AG04450 (cell line): ENCODE measurements at regions of chr3 and their contacts with region 1.

Region 1: DNA sequence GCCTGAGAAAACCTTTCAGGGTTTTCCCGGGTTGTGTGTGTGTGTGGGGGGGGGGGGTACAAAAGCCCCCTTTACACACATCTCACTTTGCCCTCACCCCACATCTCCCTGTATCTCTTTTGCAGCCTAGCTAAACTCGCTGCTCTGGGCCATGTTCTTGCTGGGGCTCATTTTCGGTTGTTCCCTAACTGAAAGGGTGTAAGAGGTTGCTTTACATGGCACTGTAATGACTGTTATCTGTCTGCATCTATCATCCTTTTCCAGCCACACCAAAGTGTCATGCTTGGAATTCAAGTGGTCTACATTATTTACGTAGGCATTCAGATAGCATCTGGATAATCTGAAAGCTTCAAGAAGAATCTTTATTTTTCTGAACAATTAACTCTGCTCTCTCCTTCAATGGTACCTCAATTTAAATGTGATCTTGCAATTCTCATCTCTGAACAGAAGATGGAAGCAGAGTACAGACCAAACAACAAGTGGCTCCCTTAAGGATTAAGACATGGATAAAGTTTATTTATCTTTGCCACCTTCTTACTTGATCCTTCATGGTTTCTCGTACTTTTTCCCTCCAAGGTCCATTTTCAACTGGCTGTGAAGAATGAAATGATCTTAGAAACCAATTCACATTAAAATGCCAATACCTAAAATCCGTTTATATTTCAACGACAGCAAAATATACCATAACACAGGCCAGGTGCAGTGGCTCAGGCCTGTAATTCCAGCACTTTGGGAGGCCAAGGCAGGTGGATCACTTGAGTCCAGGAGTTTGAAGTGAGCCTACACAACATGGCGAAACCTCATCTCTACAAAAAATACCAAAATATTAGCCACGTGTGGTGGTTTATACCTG is 34.9 kb downstream of the DCLK3 start:
- DNase-seq: peak; percentile 23
- H3K4me3 ChIP-seq: no peak overlapping the region
- H3K27ac ChIP-seq: no peak overlapping the region
- H3K27me3 ChIP-seq: peaks cover 9% of the 10 kb centered on the region
- CTCF ChIP-seq: peak; percentile 78

Region 2: DNA sequence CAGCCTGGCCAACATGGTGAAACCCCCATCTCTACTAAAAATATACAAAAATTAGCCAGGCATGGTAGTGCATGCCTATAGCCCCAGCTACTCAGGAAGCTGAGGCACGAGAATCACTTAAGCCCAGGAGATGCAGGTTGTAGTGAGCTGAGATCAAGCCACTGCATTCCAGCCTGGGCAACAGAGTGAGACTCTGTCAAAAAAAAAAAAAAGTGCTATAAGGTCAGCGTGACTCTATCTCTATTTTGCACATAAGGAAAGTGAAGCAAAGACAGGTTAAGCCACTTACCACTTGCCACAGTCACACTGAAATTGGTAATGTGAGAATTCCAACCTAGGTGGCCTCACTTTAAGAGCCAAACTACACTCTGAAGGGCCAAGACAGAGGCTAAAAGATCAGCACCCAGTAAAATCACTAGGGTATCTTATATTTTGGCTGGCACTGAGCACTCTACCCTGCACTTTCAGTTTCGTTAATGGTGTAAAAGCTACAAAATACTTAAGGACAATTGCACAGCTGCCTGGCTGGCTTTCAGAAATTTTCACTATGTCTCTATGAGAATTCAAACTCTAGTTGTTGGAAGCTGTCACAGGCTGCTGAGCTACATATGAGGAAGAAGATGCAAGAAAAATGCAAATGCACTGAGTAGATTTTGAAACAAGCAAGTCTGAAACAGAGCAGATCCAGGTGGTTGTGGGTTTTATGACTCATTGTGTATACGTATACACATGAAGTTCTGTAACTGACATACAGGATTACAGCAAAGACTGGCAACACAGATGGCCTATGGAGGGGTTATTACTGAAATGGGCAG is 182.8 kb after region 1 on chr3:
- CTCF ChIA-PET with region 1: interaction called, 13 read pairs
- POLR2A ChIA-PET with region 1: no interaction called
- DNase-seq: peak; percentile 81
- H3K4me3 ChIP-seq: peak overlapping the region; percentile 41
- H3K27ac ChIP-seq: peak overlapping the region; percentile 82
- H3K27me3 ChIP-seq: no peaks in the 10 kb centered on the region
- CTCF ChIP-seq: no peak